Activated naive CD4-positive, alpha-beta T cell treated with anti-CD3 and anti-CD28 coated beads for 36 hours (primary cell): ENCODE measurements at regions of chrX and their contacts with region 1.

Region 1: GRCh38 chrX:49155900-49156837 is 6.4 kb upstream of the MAGIX start:
- DNase-seq: peak; percentile 88
- H3K4me3 Mint-ChIP-seq: peak overlapping the region; percentile 92
- H3K27ac Mint-ChIP-seq: peak overlapping the region; percentile 97
- H3K4me1 Mint-ChIP-seq: peaks cover 11% of the 10 kb centered on the region
- H3K27me3 Mint-ChIP-seq: no peaks in the 10 kb centered on the region

Region 2: GRCh38 chrX:49191033-49191871 is 35.1 kb after region 1 on chrX:
- CTCF ChIA-PET with region 1: interaction called, 3 read pairs
- intact Hi-C with region 1: loop called (anchors 2 kb)
- DNase-seq: peak; percentile 89
- H3K4me3 Mint-ChIP-seq: peak overlapping the region; percentile 97
- H3K27ac Mint-ChIP-seq: peak overlapping the region; percentile 94
- H3K4me1 Mint-ChIP-seq: peaks cover 25% of the 10 kb centered on the region
- H3K27me3 Mint-ChIP-seq: no peaks in the 10 kb centered on the region